Heart left ventricle (tissue), 16 donors: ENCODE measurements at regions of chr21 and their contacts with region 1.

Region 1: GRCh38 chr21:39332175-39332574 is 16.7 kb downstream of the HMGN1 start:
- DNase-seq: no peak
- ATAC-seq: peak in 1 of 4 donors; percentile 18
- H3K4me3 ChIP-seq: no peak overlapping the region
- H3K27ac ChIP-seq: no peak overlapping the region
- H3K4me1 ChIP-seq: peaks cover 0 to 6% (median 0%) of the 10 kb centered on the region in 12 donors
- H3K27me3 ChIP-seq: no peaks in the 10 kb centered on the region
- CTCF ChIP-seq: no peak
- POLR2A ChIP-seq: no peak

Region 2: GRCh38 chr21:38805328-38806152 is 526.6 kb before region 1 on chr21 and contains the start of gene ETS2:
- intact Hi-C with region 1: no loop called
- DNase-seq: peak; percentile 93 to 96 (median 95)
- ATAC-seq: peak; percentile 88 to 94 (median 92)
- H3K4me3 ChIP-seq: peak within 1 kb of the TSS; percentile 67 to 99 (median 94)
- H3K27ac ChIP-seq: peak within 1 kb of the TSS; percentile 87 to 99 (median 98)
- H3K4me1 ChIP-seq: peaks cover 0 to 42% (median 17%) of the 10 kb centered on the region in 12 donors
- H3K27me3 ChIP-seq: no peaks in the 10 kb centered on the region
- CTCF ChIP-seq: peak in 3 of 12 donors; percentile 10 to 16 (median 13)
- POLR2A ChIP-seq: peak in 1 of 2 donors; percentile 93
- total RNA-seq, gene ETS2: 27.9 to 92.7 (median 45.1) TPM

Region 3: GRCh38 chr21:39445321-39446269 is 113.4 kb after region 1 on chr21 and contains the start of gene LCA5L:
- intact Hi-C with region 1: loop called in 1 of 10 experiments (anchors 10 kb)
- DNase-seq: peak; percentile 92 to 97 (median 94)
- ATAC-seq: peak; percentile 82 to 93 (median 92)
- H3K4me3 ChIP-seq: peak within 1 kb of the TSS; percentile 50 to 95 (median 85)
- H3K27ac ChIP-seq: peak within 1 kb of the TSS; percentile 69 to 99 (median 93)
- H3K4me1 ChIP-seq: peaks cover 0 to 26% (median 12%) of the 10 kb centered on the region in 12 donors
- H3K27me3 ChIP-seq: no peaks in the 10 kb centered on the region
- CTCF ChIP-seq: peak in 4 of 12 donors; percentile 9 to 28 (median 18)
- POLR2A ChIP-seq: peak; percentile 38 to 87
- total RNA-seq, gene LCA5L: 0.67 to 1.5 (median 1.0) TPM in 7 of 9 donors, not detected in the others